Activated CD4-positive, alpha-beta T cell treated with anti-CD3 and anti-CD28 coated beads for 36 hours (primary cell): ENCODE measurements at regions of chr11 and their contacts with region 1.

Region 1: GRCh38 chr11:7442588-7443215 is 42.6 kb upstream of the OLFML1 start:
- DNase-seq: peak; percentile 85
- ATAC-seq: peak; percentile 89
- H3K4me3 Mint-ChIP-seq: no peak overlapping the region
- H3K27ac Mint-ChIP-seq: no peak overlapping the region
- H3K4me1 Mint-ChIP-seq: no peaks in the 10 kb centered on the region
- H3K27me3 Mint-ChIP-seq: no peaks in the 10 kb centered on the region

Region 2: DNA sequence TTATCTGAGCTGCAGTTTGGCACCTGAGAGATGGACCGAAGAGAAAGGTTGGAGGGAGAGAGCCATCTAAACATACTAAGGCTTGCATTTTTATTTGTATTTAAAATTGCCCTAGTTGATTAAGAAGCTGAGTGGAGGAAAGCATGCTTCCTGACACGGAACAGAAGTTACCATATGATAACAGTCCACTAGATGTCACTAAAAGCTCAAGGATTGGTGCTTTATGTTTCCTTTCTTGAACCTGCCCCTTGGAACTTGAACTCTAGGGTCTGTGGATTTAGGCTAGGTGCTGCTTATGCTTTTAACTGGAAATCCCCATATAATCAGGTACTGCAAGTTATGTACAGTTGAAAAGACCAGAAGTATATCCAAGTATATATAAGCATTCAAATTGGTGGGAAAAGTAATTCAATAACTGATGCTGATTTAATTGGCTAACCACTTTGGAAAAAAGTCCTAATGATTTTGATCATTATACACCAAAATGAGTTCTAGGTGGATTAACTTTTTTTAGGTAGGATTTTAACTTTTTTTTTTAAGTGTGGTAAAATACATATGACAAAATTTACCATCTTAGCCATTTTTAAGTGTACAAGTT is 344.4 kb before region 1 on chr11:
- CTCF ChIA-PET with region 1: interaction called, 6 read pairs
- POLR2A ChIA-PET with region 1: no interaction called
- intact Hi-C with region 1: loop called (anchors 1 kb)
- DNase-seq: no peak
- ATAC-seq: peak; percentile 70
- H3K4me3 Mint-ChIP-seq: no peak overlapping the region
- H3K27ac Mint-ChIP-seq: no peak overlapping the region
- H3K4me1 Mint-ChIP-seq: no peaks in the 10 kb centered on the region
- H3K27me3 Mint-ChIP-seq: peaks cover 10% of the 10 kb centered on the region

Region 3: DNA sequence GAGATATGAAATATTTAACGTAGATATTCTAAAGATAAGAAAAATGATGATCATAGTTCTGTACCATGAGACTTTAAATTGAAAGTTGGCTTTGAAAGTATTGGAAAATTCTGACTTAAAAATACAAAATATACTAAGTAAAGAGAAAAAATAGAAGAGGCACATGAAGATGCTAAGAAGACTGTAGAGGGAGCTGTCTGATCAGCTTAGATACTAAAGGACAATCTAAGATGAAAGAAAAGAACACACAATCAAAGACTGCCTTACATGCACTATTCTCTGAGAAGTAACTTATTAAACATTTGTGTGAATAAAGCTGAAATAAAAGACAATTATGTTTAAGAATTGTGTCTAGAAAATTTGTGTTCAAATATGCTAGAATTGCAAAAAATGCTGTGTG is 298.8 kb before region 1 on chr11:
- CTCF ChIA-PET with region 1: interaction called, 4 read pairs
- POLR2A ChIA-PET with region 1: no interaction called
- intact Hi-C with region 1: loop called in 1 of 2 experiments (anchors 2 kb)
- DNase-seq: no peak
- ATAC-seq: no peak
- H3K4me3 Mint-ChIP-seq: no peak overlapping the region
- H3K27ac Mint-ChIP-seq: no peak overlapping the region
- H3K4me1 Mint-ChIP-seq: no peaks in the 10 kb centered on the region
- H3K27me3 Mint-ChIP-seq: no peaks in the 10 kb centered on the region

Region 4: DNA sequence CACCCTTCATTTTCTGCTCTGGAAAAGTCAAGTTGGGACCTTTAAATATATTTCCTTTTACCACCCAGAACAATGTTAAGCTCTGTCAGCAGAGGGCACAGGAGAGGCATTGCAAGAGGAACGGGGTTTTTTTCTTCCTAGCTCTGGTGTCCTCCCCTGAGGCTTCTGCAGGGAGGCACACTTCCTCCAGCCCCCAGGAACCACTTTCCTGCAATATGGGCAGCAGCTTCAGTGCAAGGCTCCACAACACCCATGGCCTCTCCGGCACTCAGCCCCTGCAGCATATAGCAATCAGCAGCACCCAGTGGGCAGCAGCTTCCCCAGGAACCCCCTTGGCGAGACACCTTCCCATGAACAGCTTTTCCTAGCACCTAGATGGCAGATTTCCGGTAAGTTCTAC is 89.6 kb before region 1 on chr11:
- CTCF ChIA-PET with region 1: interaction called, 9 read pairs
- POLR2A ChIA-PET with region 1: no interaction called
- intact Hi-C with region 1: loop called (anchors 1 to 5 kb)
- DNase-seq: peak; percentile 40
- ATAC-seq: peak; percentile 39
- H3K4me3 Mint-ChIP-seq: no peak overlapping the region
- H3K27ac Mint-ChIP-seq: no peak overlapping the region
- H3K4me1 Mint-ChIP-seq: no peaks in the 10 kb centered on the region
- H3K27me3 Mint-ChIP-seq: peaks cover 8% of the 10 kb centered on the region

Region 5: DNA sequence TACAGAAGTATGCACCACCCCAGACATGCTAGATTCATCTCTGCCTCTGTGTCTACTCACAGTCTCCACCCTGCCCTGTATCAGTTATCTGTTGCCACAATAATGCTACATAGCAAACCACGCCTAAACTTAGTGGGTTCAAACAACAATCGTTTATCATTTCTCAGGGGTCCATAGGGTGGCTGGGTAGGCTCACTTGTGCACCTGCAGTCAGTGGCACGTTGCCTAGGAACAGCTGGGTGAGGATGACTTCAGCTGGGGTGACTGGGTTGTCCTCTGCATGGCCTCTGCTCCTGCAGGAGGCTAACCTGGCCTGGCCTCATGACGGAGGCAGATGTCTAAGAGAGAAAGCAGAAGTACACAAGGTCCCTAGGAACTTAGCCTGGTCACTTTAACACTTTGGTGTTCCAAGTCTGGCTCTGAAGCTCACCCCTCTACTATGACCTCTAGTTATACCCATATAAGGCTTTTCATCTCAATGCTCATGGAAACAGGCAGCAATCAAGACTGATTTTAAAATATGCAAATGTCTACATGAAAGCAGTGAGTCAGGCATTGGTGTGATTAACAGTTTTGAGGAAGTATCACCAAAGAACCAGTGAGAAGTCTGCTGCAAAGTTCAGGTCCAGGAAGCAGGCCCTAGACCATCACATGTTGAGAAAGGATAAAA is 53.3 kb after region 1 on chr11:
- CTCF ChIA-PET with region 1: no interaction called
- POLR2A ChIA-PET with region 1: no interaction called
- intact Hi-C with region 1: no loop called
- DNase-seq: peak; percentile 33
- ATAC-seq: peak; percentile 94
- H3K4me3 Mint-ChIP-seq: no peak overlapping the region
- H3K27ac Mint-ChIP-seq: peak overlapping the region; percentile 48
- H3K4me1 Mint-ChIP-seq: peaks cover 11% of the 10 kb centered on the region
- H3K27me3 Mint-ChIP-seq: no peaks in the 10 kb centered on the region

Region 6: GRCh38 chr11:7665473-7666291 is 223.0 kb after region 1 on chr11:
- CTCF ChIA-PET with region 1: no interaction called
- POLR2A ChIA-PET with region 1: no interaction called
- intact Hi-C with region 1: loop called (anchors 5 kb)
- DNase-seq: peak; percentile 90
- ATAC-seq: peak; percentile 98
- H3K4me3 Mint-ChIP-seq: no peak overlapping the region
- H3K27ac Mint-ChIP-seq: no peak overlapping the region
- H3K4me1 Mint-ChIP-seq: peaks cover 6% of the 10 kb centered on the region
- H3K27me3 Mint-ChIP-seq: no peaks in the 10 kb centered on the region

Region 7: DNA sequence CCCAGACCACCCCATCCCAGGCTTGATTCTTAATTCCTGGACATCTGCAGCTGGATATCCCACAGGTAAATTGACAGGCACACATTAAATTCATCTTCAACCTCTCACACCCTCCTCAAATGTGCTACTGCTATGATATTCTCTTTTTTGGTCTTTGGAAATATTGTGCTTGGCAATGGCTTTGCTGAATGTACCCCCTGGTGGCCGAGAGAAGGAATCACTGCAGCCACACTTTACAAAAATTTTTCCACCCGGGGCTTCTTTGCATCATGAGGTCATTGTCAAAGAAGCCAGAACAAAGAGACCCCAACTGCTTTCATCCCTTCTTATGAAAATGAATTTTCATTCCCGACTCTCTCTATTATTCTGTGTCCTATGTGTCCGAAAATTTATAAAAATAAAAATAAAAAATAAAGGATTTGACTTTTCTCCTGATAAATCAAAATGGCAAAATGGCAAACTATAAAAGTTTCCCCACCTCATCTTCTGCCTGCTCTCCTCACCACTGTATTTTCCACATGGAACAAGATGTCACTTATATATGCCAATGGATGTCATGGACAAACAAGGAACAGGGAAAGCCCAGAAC is 245.6 kb after region 1 on chr11:
- CTCF ChIA-PET with region 1: interaction called, 5 read pairs
- POLR2A ChIA-PET with region 1: no interaction called
- intact Hi-C with region 1: loop called in 1 of 2 experiments (anchors 10 kb)
- DNase-seq: peak; percentile 38
- ATAC-seq: peak; percentile 44
- H3K4me3 Mint-ChIP-seq: no peak overlapping the region
- H3K27ac Mint-ChIP-seq: no peak overlapping the region
- H3K4me1 Mint-ChIP-seq: peaks cover 5% of the 10 kb centered on the region
- H3K27me3 Mint-ChIP-seq: peaks cover 30% of the 10 kb centered on the region

Region 8: DNA sequence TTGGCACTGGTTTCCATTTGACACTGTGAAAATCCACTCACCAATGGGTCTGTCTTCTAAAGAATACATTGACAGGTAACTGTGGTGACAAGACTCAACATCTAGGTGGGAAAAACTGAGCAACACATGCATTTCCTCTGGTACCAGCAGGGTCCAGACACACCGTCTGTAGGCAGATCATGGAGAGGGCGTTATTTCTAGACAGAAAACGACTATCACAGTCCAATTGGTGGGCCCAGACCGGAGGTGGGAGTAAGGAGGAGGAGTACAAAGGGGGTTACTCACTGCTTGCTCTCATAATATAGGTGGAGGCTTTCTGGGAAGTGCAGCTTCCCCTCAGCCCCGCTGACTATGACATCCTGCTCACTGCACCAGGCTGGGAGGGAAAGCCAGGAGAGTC is 253.7 kb after region 1 on chr11:
- CTCF ChIA-PET with region 1: interaction called, 4 read pairs
- POLR2A ChIA-PET with region 1: no interaction called
- intact Hi-C with region 1: loop called (anchors 2 to 10 kb)
- DNase-seq: peak; percentile 20
- ATAC-seq: peak; percentile 75
- H3K4me3 Mint-ChIP-seq: no peak overlapping the region
- H3K27ac Mint-ChIP-seq: no peak overlapping the region
- H3K4me1 Mint-ChIP-seq: peaks cover 4% of the 10 kb centered on the region
- H3K27me3 Mint-ChIP-seq: peaks cover 24% of the 10 kb centered on the region